Activated B cell treated with CpG ODN at 0.5 μM for 24 hours (primary cell): ENCODE measurements at regions of chr15 and their contacts with region 1.

Region 1: DNA sequence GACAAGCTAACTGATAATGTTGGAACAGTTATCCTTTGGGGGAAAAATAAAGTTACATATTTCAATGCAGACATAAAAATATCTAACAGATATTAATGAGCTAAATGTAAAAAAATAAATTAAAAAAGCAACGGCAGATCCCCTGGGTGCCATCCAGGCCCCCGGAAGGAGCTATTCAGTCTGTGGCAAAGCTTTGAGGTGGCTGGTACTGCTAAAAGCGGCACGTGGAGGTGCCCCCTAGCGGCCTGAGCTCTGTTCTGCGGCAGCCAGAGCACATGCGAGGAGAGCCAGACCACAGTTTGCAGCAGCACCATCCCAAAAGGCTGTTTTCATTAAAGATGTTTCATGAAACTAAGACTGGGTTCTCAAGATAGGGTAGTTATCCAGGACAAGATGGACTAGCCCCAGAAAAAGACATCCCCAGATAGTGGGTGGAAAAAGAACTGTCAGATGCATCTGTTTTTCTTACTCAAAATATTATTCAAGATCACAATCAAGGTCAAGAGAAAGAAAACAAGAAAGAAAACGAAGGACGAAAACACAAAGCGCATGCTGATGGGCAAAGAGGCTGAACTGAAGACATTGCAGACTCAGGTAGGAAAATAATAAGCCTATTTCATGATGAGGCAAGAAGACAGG is 18.7 kb downstream of the AP3S2 start:
- DNase-seq: peak; percentile 67
- ATAC-seq: peak; percentile 100
- H3K4me3 Mint-ChIP-seq: no peak overlapping the region
- H3K27ac Mint-ChIP-seq: no peak overlapping the region
- H3K4me1 Mint-ChIP-seq: peaks cover 2% of the 10 kb centered on the region
- H3K27me3 Mint-ChIP-seq: no peaks in the 10 kb centered on the region
- CTCF ChIP-seq: no peak

Region 2: DNA sequence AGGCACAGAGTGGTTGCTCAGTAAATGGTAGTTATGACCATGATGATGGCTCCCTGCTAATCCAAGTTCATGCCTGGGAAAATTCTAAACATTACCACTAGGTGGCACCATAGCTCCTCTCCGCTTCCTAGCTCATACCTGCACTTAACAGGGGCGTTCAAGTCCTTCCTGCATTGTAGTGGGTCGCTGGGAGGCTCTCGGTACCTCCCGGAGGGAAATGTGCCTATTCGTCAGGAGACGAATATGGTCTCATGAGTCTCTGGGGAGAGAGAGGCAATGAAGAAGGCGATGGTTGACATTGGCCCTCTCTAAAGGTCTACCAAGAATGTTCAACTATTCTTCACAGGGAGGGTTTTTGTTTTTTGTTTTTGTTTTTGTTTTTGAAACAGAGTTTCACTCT is 134.9 kb before region 1 on chr15:
- CTCF ChIA-PET with region 1: interaction called, 76 read pairs
- POLR2A ChIA-PET with region 1: no interaction called
- intact Hi-C with region 1: loop called (anchors 1 kb)
- DNase-seq: no peak
- ATAC-seq: peak; percentile 90
- H3K4me3 Mint-ChIP-seq: peak overlapping the region; percentile 15
- H3K27ac Mint-ChIP-seq: no peak overlapping the region
- H3K4me1 Mint-ChIP-seq: peaks cover 2% of the 10 kb centered on the region
- H3K27me3 Mint-ChIP-seq: peaks cover 8% of the 10 kb centered on the region
- CTCF ChIP-seq: peak; percentile 25

Region 3: GRCh38 chr15:89760303-89761008 is 114.6 kb before region 1 on chr15:
- CTCF ChIA-PET with region 1: interaction called, 219 read pairs
- POLR2A ChIA-PET with region 1: interaction called, 9 read pairs
- intact Hi-C with region 1: loop called (anchors 1 kb)
- DNase-seq: peak; percentile 75
- ATAC-seq: peak; percentile 90
- H3K4me3 Mint-ChIP-seq: no peak overlapping the region
- H3K27ac Mint-ChIP-seq: no peak overlapping the region
- H3K4me1 Mint-ChIP-seq: peaks cover 3% of the 10 kb centered on the region
- H3K27me3 Mint-ChIP-seq: no peaks in the 10 kb centered on the region
- CTCF ChIP-seq: peak; percentile 73

Region 4: GRCh38 chr15:89851673-89852341 is 23.2 kb before region 1 on chr15:
- CTCF ChIA-PET with region 1: interaction called, 7 read pairs
- POLR2A ChIA-PET with region 1: interaction called, 3 read pairs
- intact Hi-C with region 1: loop called (anchors 2 kb)
- DNase-seq: no peak
- ATAC-seq: peak; percentile 72
- H3K4me3 Mint-ChIP-seq: peak overlapping the region; percentile 16
- H3K27ac Mint-ChIP-seq: peak overlapping the region; percentile 93
- H3K4me1 Mint-ChIP-seq: peaks cover 48% of the 10 kb centered on the region
- H3K27me3 Mint-ChIP-seq: no peaks in the 10 kb centered on the region
- CTCF ChIP-seq: no peak

Region 5: GRCh38 chr15:89888214-89888804 is 13.3 kb after region 1 on chr15:
- CTCF ChIA-PET with region 1: interaction called, 27 read pairs
- POLR2A ChIA-PET with region 1: interaction called, 7 read pairs
- intact Hi-C with region 1: no loop called
- DNase-seq: no peak
- ATAC-seq: no peak
- H3K4me3 Mint-ChIP-seq: no peak overlapping the region
- H3K27ac Mint-ChIP-seq: no peak overlapping the region
- H3K4me1 Mint-ChIP-seq: peaks cover 30% of the 10 kb centered on the region
- H3K27me3 Mint-ChIP-seq: no peaks in the 10 kb centered on the region
- CTCF ChIP-seq: no peak

Region 6: GRCh38 chr15:90086868-90087268 is 211.8 kb after region 1 on chr15:
- CTCF ChIA-PET with region 1: interaction called, 6 read pairs
- POLR2A ChIA-PET with region 1: no interaction called
- intact Hi-C with region 1: loop called (anchors 1 kb)
- DNase-seq: peak; percentile 45
- ATAC-seq: peak; percentile 79
- H3K4me3 Mint-ChIP-seq: no peak overlapping the region
- H3K27ac Mint-ChIP-seq: no peak overlapping the region
- H3K4me1 Mint-ChIP-seq: peaks cover 15% of the 10 kb centered on the region
- H3K27me3 Mint-ChIP-seq: no peaks in the 10 kb centered on the region
- CTCF ChIP-seq: peak; percentile 22